PC-3 (cell line): ENCODE measurements at regions of chr17 and their contacts with region 1.

Region 1: GRCh38 chr17:48351831-48352332 is 78.1 kb downstream of the SKAP1 start:
- DNase-seq: peak; percentile 75
- ATAC-seq: no peak
- H3K4me3 ChIP-seq: no peak overlapping the region
- H3K27ac ChIP-seq: no peak overlapping the region
- H3K4me1 ChIP-seq: no peaks in the 10 kb centered on the region
- H3K27me3 ChIP-seq: no peaks in the 10 kb centered on the region
- CTCF ChIP-seq: peak; percentile 91

Region 2: GRCh38 chr17:48457080-48457836 is 105.4 kb after region 1 on chr17:
- CTCF ChIA-PET with region 1: no interaction called
- POLR2A ChIA-PET with region 1: no interaction called
- intact Hi-C with region 1: loop called (anchors 1 kb)
- DNase-seq: peak; percentile 87
- ATAC-seq: peak; percentile 95
- H3K4me3 ChIP-seq: peak overlapping the region; percentile 55
- H3K27ac ChIP-seq: no peak overlapping the region
- H3K4me1 ChIP-seq: peaks cover 9% of the 10 kb centered on the region
- H3K27me3 ChIP-seq: no peaks in the 10 kb centered on the region
- CTCF ChIP-seq: peak; percentile 100

Region 3: GRCh38 chr17:48492401-48493298 is 140.8 kb after region 1 on chr17:
- CTCF ChIA-PET with region 1: interaction called, 5 read pairs
- POLR2A ChIA-PET with region 1: no interaction called
- intact Hi-C with region 1: loop called (anchors 2 kb)
- DNase-seq: peak; percentile 77
- ATAC-seq: peak; percentile 91
- H3K4me3 ChIP-seq: peak overlapping the region; percentile 44
- H3K27ac ChIP-seq: no peak overlapping the region
- H3K4me1 ChIP-seq: peaks cover 58% of the 10 kb centered on the region
- H3K27me3 ChIP-seq: no peaks in the 10 kb centered on the region
- CTCF ChIP-seq: peak; percentile 94

Region 4: GRCh38 chr17:48593840-48594537 is 242.1 kb after region 1 on chr17:
- CTCF ChIA-PET with region 1: interaction called, 14 read pairs
- POLR2A ChIA-PET with region 1: no interaction called
- intact Hi-C with region 1: loop called (anchors 2 kb)
- DNase-seq: peak; percentile 88
- ATAC-seq: peak; percentile 56
- H3K4me3 ChIP-seq: peak overlapping the region; percentile 4; the same call in 1 of the 2 replicates
- H3K27ac ChIP-seq: no peak overlapping the region
- H3K4me1 ChIP-seq: peaks cover 13% of the 10 kb centered on the region
- H3K27me3 ChIP-seq: no peaks in the 10 kb centered on the region
- CTCF ChIP-seq: peak; percentile 97